ENCODE measurements at regions of chr6 and their contacts with region 1.

Region 1: GRCh38 chr6:110039364-110039980 is 61.4 kb downstream of the GPR6 start:
- DNase-seq: peak; percentile 92
- ATAC-seq: peak; percentile 87
- H3K4me3 Mint-ChIP-seq: peak overlapping the region; percentile 79
- H3K27ac Mint-ChIP-seq: peak overlapping the region; percentile 98
- H3K4me1 Mint-ChIP-seq: peaks cover 13% of the 10 kb centered on the region
- H3K27me3 Mint-ChIP-seq: no peaks in the 10 kb centered on the region

Region 2: GRCh38 chr6:109103942-109104341 is 935.5 kb before region 1 on chr6:
- CTCF ChIA-PET with region 1: no interaction called
- POLR2A ChIA-PET with region 1: no interaction called
- intact Hi-C with region 1: no loop called
- DNase-seq: no peak
- ATAC-seq: peak; percentile 30
- H3K4me3 Mint-ChIP-seq: no peak overlapping the region
- H3K27ac Mint-ChIP-seq: no peak overlapping the region
- H3K4me1 Mint-ChIP-seq: peaks cover 2% of the 10 kb centered on the region
- H3K27me3 Mint-ChIP-seq: no peaks in the 10 kb centered on the region

Region 3: GRCh38 chr6:109690737-109691621 is 348.5 kb before region 1 on chr6 and contains the starts of genes AK9 and FIG4:
- CTCF ChIA-PET with region 1: interaction called, 18 read pairs
- POLR2A ChIA-PET with region 1: no interaction called
- intact Hi-C with region 1: loop called in 1 of 2 experiments (anchors 1 kb)
- DNase-seq: peak; percentile 95
- ATAC-seq: peak; percentile 94
- H3K4me3 Mint-ChIP-seq: peak within 1 kb of the TSS; percentile 94
- H3K27ac Mint-ChIP-seq: peak within 1 kb of the TSS; percentile 92
- H3K4me1 Mint-ChIP-seq: peaks cover 38% of the 10 kb centered on the region
- H3K27me3 Mint-ChIP-seq: no peaks in the 10 kb centered on the region
- total RNA-seq, gene AK9: 3.5 to 5.2 TPM
- total RNA-seq, gene FIG4: 14.4 to 17.5 TPM

Region 4: GRCh38 chr6:109722564-109723254 is 316.8 kb before region 1 on chr6:
- CTCF ChIA-PET with region 1: interaction called, 10 read pairs
- POLR2A ChIA-PET with region 1: no interaction called
- intact Hi-C with region 1: no loop called
- DNase-seq: no peak
- ATAC-seq: no peak
- H3K4me3 Mint-ChIP-seq: no peak overlapping the region
- H3K27ac Mint-ChIP-seq: no peak overlapping the region
- H3K4me1 Mint-ChIP-seq: no peaks in the 10 kb centered on the region
- H3K27me3 Mint-ChIP-seq: no peaks in the 10 kb centered on the region

Region 5: DNA sequence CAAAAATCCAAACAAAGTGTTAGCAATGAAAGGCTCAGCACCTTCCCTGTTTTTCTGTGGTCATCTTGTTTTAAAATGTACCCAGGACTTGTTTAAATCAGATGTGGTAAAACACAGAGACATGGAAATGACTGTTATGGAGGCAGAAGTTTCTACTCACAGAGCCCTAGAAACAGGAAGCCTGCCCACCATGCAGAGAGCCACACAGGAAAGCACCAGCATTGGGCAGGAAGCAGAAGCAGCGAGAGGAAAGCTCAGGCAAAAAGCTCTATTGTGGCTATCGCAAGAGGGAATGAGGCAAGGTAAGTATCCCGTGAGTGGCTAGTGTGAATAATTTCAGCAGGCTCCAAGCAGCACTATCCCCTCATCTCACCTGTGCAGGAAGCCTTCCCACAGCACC is 18.6 kb before region 1 on chr6:
- CTCF ChIA-PET with region 1: interaction called, 30 read pairs
- POLR2A ChIA-PET with region 1: no interaction called
- intact Hi-C with region 1: no loop called
- DNase-seq: peak; percentile 16
- ATAC-seq: no peak
- H3K4me3 Mint-ChIP-seq: no peak overlapping the region
- H3K27ac Mint-ChIP-seq: no peak overlapping the region
- H3K4me1 Mint-ChIP-seq: peaks cover 9% of the 10 kb centered on the region
- H3K27me3 Mint-ChIP-seq: no peaks in the 10 kb centered on the region

Region 6: DNA sequence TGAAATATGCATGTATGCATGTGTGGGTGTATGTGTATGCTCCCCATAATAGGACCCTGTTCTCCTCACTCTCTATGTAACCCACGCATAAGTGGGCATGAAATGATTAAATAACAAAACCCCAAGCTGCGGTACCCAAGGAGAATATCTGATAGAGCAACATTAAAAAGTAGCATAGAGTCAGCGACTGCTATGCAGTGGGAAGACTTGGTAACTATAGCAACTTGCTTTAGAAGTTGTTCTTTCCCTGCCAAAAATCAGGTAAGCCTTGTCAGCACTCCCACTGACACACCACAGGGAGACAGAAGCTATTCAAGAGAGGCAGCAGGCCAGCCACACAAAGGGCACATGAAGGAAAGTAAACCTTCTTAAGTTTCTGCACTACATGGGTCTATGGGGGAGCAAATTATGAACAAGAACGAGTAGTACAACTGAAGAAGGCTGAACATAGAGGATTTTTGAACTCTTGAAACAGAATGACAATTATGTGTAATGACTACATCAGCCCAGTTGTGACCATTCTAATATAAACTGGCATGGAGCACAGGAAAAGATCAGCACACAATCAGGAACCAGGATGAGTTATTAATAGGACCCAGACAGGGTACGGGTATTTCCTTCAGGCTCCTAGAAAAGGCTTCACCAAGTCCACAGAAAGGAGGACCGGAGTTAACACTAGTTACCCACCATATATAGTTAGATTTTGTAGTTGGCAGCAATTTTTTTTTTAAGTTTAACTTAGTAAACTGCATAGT is 28.5 kb after region 1 on chr6:
- CTCF ChIA-PET with region 1: interaction called, 16 read pairs
- POLR2A ChIA-PET with region 1: no interaction called
- intact Hi-C with region 1: no loop called
- DNase-seq: no peak
- ATAC-seq: no peak
- H3K4me3 Mint-ChIP-seq: no peak overlapping the region
- H3K27ac Mint-ChIP-seq: no peak overlapping the region
- H3K4me1 Mint-ChIP-seq: no peaks in the 10 kb centered on the region
- H3K27me3 Mint-ChIP-seq: peaks cover 19% of the 10 kb centered on the region

Region 7: DNA sequence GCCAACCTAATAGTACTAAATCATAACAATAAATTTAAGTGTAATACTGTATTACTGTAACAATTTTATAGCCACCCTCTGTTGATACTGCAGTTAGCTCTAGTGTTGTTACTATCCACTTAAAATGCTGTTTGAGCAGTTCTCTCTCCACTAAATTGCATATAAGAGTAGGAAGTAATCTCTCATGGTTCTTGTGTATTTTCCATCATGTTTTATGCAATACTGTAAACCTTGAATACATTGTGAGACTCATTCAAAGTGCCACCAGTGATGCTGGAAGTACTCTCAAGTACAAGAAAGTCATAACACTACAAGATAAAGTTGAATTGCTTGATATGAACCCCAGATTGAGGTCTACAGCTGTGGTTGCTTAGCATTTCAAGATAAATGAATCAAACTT is 74.5 kb after region 1 on chr6:
- CTCF ChIA-PET with region 1: no interaction called
- POLR2A ChIA-PET with region 1: no interaction called
- intact Hi-C with region 1: no loop called
- DNase-seq: no peak
- ATAC-seq: no peak
- H3K4me3 Mint-ChIP-seq: no peak overlapping the region
- H3K27ac Mint-ChIP-seq: no peak overlapping the region
- H3K4me1 Mint-ChIP-seq: no peaks in the 10 kb centered on the region
- H3K27me3 Mint-ChIP-seq: no peaks in the 10 kb centered on the region

Region 8: GRCh38 chr6:110421749-110422443 is 382.4 kb after region 1 on chr6:
- CTCF ChIA-PET with region 1: no interaction called
- POLR2A ChIA-PET with region 1: no interaction called
- intact Hi-C with region 1: no loop called
- DNase-seq: no peak
- ATAC-seq: no peak
- H3K4me3 Mint-ChIP-seq: no peak overlapping the region
- H3K27ac Mint-ChIP-seq: no peak overlapping the region
- H3K4me1 Mint-ChIP-seq: no peaks in the 10 kb centered on the region
- H3K27me3 Mint-ChIP-seq: peaks cover 28% of the 10 kb centered on the region